ENCODE measurements at regions of chr20 and their contacts with region 1.

Region 1: DNA sequence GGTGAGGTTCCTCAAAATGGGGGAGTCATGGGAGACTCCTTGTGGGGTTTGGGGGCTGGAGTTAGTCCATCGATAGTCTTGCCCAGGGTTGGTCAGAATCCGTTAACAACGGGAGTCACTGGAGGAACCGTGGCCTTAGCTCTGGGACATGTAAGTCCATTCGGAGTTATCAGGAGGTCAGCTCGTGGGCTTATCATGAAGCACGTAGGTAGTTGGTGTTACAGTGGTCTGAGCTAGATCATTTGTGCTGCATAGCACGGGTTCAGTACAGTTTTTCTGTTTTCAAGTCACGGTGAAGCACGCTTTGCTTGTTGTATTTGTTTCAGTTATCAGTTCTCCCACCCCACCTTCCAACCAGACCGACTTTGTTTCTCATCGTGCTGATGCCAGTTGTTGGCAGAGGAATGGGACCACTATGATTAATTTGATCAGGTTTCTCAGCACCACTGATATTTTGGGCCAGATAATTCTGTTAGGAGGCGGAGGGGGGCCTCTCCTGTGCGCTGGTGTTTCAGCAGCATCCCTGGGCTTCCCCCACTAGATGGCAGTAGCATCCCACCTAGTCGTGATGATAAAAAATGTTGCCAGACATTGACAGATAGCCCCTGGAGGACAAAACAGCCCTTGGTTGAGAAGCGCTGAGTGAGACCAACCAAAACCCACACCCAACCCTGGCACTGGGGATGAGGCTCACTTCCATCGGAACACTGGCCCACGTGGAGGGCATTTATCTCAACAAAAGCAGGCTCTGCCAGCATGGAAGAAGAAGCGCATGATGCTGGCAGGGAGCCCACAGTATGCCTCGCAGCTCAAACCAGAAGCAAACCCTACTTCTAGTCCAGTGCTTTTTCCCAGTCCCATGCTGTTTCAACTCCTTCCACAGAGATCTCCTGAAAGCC is 2.2 kb upstream of the APMAP start:
- DNase-seq: peak; percentile 89
- H3K4me3 ChIP-seq: no peak overlapping the region
- H3K27ac ChIP-seq: no peak overlapping the region
- H3K4me1 ChIP-seq: peaks cover 34% of the 10 kb centered on the region
- H3K27me3 ChIP-seq: no peaks in the 10 kb centered on the region
- CTCF ChIP-seq: peak; percentile 84 to 93 (median 89)
- POLR2A ChIP-seq: no peak

Region 2: DNA sequence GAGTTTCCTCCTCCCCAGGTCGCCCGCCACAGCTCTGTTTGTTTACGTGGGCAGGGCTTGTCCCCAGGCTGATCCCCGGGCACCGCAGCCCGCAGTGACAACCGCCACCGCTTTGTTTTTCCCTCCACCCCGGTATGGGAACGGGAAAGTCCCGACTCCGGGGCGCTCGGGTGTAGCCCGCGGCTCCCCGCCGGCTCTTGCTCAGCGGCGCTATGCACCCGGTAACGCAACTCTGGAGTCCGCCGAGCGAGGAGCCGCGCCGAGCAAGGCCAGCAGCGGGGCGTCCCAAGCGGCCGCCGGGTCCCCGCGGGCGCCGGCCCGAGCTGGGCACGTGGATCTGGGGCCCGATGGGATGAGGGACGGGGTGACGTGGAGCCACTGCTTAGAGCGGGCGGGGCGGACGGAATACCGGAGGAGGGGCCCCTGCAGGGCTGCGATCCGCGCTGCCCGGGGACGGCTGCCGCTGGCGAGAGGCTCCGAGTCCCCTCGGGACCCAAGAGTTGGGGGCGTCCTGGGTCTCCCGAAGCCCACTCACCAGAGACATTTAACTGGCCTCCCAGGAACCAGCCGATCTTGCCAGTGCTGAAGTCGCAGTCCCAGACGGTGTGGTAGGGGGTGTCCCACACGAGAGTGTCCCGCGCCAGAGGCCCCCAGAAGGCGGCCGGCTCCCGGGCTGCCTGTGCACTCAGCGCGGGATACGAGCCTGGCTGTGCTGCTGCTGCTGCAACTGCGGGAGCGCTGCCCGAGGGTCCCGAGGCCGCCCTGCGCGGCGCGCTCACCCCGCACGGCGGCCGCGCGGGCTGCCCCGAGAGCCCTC is 62.7 kb after region 1 on chr20:
- intact Hi-C with region 1: loop called (anchors 5 kb)
- DNase-seq: peak; percentile 74
- H3K4me3 ChIP-seq: peak overlapping the region; percentile 79 to 88
- H3K27ac ChIP-seq: peak overlapping the region; percentile 83 to 92
- H3K4me1 ChIP-seq: peaks cover 50% of the 10 kb centered on the region
- H3K27me3 ChIP-seq: no peaks in the 10 kb centered on the region
- CTCF ChIP-seq: no peak
- POLR2A ChIP-seq: no peak